Gastrocnemius medialis (tissue), 4 donors: ENCODE measurements at regions of chr3 and their contacts with region 1.

Region 1: DNA sequence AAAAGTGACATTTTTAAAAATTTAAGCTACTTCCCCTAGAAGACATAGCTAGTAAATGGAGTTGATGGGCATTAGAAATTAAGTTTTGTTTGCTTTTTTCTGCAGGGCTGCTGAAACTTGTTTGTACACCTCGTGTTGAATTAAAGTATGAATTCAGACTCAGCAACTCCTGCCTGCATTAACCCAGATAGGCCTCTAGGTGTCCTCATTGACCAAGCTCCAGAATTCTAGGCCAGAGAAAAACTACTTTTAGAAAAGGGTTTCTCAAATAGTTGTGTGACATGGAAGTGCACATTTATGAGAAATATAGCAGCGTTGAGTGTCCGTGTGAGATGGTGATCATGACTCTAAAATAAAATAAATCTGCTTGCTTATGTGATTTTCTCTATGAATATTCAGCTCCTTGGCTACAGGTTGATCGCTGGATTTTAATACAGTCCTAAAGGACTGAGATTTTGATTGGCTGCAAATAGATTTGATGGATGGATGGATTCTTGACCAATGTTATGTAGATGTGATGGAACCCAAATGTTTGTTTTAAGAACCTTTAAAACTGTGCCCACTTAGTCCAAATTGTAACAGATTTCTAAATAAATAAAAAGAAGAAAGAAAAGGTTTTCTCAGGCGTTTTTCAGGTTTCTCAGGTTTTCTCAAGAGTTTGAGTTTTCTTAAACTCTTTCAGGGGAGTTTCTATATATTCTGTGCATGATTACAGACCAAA is 39.4 kb upstream of the LMOD3 start:
- DNase-seq: no peak
- ATAC-seq: peak in 1 of 2 donors; percentile 76
- H3K4me3 ChIP-seq: no peak overlapping the region
- H3K27ac ChIP-seq: no peak overlapping the region
- H3K4me1 ChIP-seq: no peaks in the 10 kb centered on the region
- H3K27me3 ChIP-seq: no peaks in the 10 kb centered on the region
- CTCF ChIP-seq: peak; percentile 79 to 95 (median 89)
- POLR2A ChIP-seq: no peak

Region 2: DNA sequence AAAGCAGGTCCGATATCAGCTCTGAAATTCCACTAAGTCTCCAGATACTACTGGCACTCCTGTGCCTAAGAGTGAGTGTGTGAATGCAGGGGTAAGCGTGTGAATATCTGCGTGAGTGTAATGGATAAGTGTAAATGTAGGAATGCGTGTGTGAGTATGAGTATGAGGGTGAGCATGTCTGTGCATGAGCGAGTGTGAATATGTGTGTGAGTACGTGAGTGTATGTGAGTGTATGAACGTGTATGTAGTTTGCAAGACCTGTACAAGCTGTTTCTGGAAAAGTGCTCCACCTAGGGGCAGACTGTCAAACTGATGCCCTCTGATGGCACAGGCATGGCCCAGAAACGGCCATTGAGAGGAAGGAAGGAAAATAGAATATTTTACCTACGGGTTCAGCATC is 248.5 kb after region 1 on chr3:
- in situ Hi-C with region 1: loop called in 3 of 4 experiments (anchors 10 kb)
- intact Hi-C with region 1: loop called (anchors 2 kb)
- DNase-seq: peak; percentile 26 to 50
- ATAC-seq: peak; percentile 69 to 87
- H3K4me3 ChIP-seq: peak overlapping the region in 1 of 4 donors; percentile 17
- H3K27ac ChIP-seq: peak overlapping the region in 2 of 4 donors; percentile 10 to 38
- H3K4me1 ChIP-seq: no peaks in the 10 kb centered on the region
- H3K27me3 ChIP-seq: no peaks in the 10 kb centered on the region
- CTCF ChIP-seq: peak; percentile 29 to 78 (median 56)
- POLR2A ChIP-seq: no peak

Region 3: DNA sequence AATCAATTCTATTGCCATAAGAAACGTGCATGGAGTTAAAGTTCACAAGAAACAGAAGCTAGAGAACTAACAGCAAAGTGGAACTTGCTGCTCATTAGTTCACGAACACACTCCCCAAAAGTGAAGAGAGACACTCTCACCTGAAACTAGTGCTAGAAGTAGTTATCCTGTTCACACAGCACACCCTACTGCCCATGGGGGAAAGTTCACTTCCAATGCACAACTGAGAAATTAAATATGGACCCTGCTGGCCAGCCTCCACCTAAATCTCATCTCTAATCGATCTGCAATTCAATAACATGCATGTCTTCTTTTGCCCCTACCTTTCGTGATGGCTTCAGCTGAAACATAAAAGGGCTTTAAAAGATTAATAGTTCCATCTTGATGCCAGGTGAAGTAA is 263.5 kb after region 1 on chr3:
- in situ Hi-C with region 1: loop called in 2 of 4 experiments (anchors 10 kb)
- intact Hi-C with region 1: no loop called
- DNase-seq: no peak
- ATAC-seq: no peak
- H3K4me3 ChIP-seq: no peak overlapping the region
- H3K27ac ChIP-seq: no peak overlapping the region
- H3K4me1 ChIP-seq: peaks cover 0 to 4% of the 10 kb centered on the region in 2 donors
- H3K27me3 ChIP-seq: no peaks in the 10 kb centered on the region
- CTCF ChIP-seq: peak in 3 of 5 experiments; percentile 4 to 32 (median 12)
- POLR2A ChIP-seq: no peak

Region 4: GRCh38 chr3:69439643-69440270 is 278.0 kb after region 1 on chr3:
- in situ Hi-C with region 1: loop called in 1 of 4 experiments (anchors 10 kb)
- intact Hi-C with region 1: no loop called
- DNase-seq: no peak
- ATAC-seq: no peak
- H3K4me3 ChIP-seq: no peak overlapping the region
- H3K27ac ChIP-seq: no peak overlapping the region
- H3K4me1 ChIP-seq: peaks cover 0 to 2% of the 10 kb centered on the region in 2 donors
- H3K27me3 ChIP-seq: no peaks in the 10 kb centered on the region
- CTCF ChIP-seq: peak in 3 of 5 experiments; percentile 12 to 53 (median 37)
- POLR2A ChIP-seq: no peak

Region 5: DNA sequence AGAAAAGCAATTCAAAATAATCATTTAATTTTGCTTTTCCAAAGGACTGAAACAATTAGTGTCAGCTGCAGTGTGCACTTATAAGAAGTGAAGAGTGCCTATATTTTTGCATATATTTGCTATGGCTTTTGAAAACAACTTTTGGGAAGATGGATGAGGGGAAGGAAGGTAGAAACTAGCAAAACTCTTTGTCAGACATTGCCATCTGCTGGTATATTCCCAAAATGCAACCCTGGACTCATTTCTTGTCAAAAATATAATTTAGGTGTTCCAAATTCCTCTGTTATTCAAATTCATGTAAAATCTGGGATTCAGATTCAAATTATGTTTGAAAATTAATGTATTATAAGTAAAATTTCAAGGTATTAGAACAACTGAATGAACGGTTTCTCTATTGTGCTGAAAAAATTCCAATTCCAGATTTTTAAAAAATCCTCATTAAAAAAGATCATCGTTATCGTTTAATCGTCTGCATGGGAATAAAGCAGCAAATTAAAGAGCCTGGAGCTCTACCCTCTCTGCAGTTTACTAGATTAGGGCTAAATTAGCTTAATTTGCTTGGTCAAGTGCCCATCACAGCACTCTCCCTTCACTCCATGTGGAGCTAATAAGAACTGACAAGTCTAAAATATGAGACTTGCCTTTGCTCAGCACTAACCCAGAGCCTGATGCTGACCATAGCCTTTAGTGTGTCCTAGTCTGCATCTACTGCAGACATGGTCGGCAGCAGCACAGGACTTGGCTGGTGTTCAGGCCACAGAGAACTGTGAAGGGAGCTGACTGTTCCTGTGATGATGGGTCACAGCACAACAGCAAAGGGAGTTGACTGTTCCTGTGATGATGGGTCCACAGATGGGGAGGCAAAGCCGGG is 509.6 kb after region 1 on chr3:
- in situ Hi-C with region 1: loop called (anchors 5 to 10 kb)
- intact Hi-C with region 1: loop called (anchors 1 kb)
- DNase-seq: no peak
- ATAC-seq: no peak
- H3K4me3 ChIP-seq: no peak overlapping the region
- H3K27ac ChIP-seq: no peak overlapping the region
- H3K4me1 ChIP-seq: no peaks in the 10 kb centered on the region
- H3K27me3 ChIP-seq: peaks cover 0 to 2% (median 0%) of the 10 kb centered on the region in 3 donors
- CTCF ChIP-seq: peak; percentile 47 to 74 (median 61)
- POLR2A ChIP-seq: no peak

Region 6: GRCh38 chr3:69806735-69807438 is 645.1 kb after region 1 on chr3:
- in situ Hi-C with region 1: loop called in 1 of 4 experiments (anchors 10 kb)
- intact Hi-C with region 1: no loop called
- DNase-seq: no peak
- ATAC-seq: no peak
- H3K4me3 ChIP-seq: no peak overlapping the region
- H3K27ac ChIP-seq: no peak overlapping the region
- H3K4me1 ChIP-seq: peaks cover 46 to 47% of the 10 kb centered on the region in 2 donors
- H3K27me3 ChIP-seq: no peaks in the 10 kb centered on the region
- CTCF ChIP-seq: no peak
- POLR2A ChIP-seq: no peak